Natural killer cell (primary cell): ENCODE measurements at regions of chr14 and their contacts with region 1.

Region 1: GRCh38 chr14:91228112-91229004 is 16.1 kb downstream of the GPR68 start:
- DNase-seq: peak; percentile 79 to 94
- ATAC-seq: peak; percentile 68 to 88 (median 82)
- H3K4me3 ChIP-seq: no peak overlapping the region
- H3K4me3 Mint-ChIP-seq: peak overlapping the region; percentile 81
- H3K27ac ChIP-seq: peak overlapping the region; percentile 90
- H3K27ac Mint-ChIP-seq: peak overlapping the region; percentile 98 to 100
- H3K4me1 ChIP-seq: peaks cover 95% of the 10 kb centered on the region
- H3K4me1 Mint-ChIP-seq: peaks cover 79 to 89% of the 10 kb centered on the region in 2 donors
- H3K27me3 ChIP-seq: no peaks in the 10 kb centered on the region
- H3K27me3 Mint-ChIP-seq: no peaks in the 10 kb centered on the region
- CTCF ChIP-seq: no peak

Region 2: DNA sequence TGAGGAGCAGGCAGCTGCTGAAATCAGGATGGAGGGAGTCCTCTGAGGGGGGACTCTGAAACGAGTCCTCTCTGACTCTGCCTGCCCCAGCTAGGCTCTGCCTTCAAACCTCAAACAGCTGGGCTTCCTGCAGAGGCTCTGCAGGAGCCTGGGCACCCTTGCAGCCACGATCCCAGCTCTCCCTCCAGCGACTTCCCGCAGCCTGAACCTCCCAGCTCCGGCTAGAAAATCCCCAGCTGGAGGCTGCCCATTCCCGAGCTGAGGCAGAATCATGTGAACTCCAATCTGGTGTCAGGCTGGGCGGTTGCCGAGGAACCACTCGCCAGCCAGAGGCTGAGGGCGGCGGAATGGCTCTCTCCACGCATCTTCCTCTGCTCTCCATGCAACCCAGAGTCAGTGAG is 16.1 kb after region 1 on chr14 and contains the start of gene GPR68:
- intact Hi-C with region 1: loop called (anchors 1 kb)
- DNase-seq: peak in 1 of 2 donors; percentile 68
- ATAC-seq: no peak
- H3K4me3 ChIP-seq: peak within 1 kb of the TSS; percentile 70
- H3K4me3 Mint-ChIP-seq: peak within 1 kb of the TSS; percentile 88
- H3K27ac ChIP-seq: peak within 1 kb of the TSS; percentile 92
- H3K27ac Mint-ChIP-seq: peak within 1 kb of the TSS; percentile 86 to 90
- H3K4me1 ChIP-seq: peaks cover 93% of the 10 kb centered on the region
- H3K4me1 Mint-ChIP-seq: peaks cover 75 to 77% of the 10 kb centered on the region in 2 donors
- H3K27me3 ChIP-seq: no peaks in the 10 kb centered on the region
- H3K27me3 Mint-ChIP-seq: no peaks in the 10 kb centered on the region
- CTCF ChIP-seq: no peak
- total RNA-seq, gene GPR68: 7.6 to 24.0 (median 15.7) TPM

Region 3: GRCh38 chr14:91286530-91286937 is 58.2 kb after region 1 on chr14:
- intact Hi-C with region 1: loop called (anchors 2 kb)
- DNase-seq: peak; percentile 76 to 88
- ATAC-seq: peak; percentile 76 to 82 (median 79)
- H3K4me3 ChIP-seq: no peak overlapping the region
- H3K4me3 Mint-ChIP-seq: no peak overlapping the region
- H3K27ac ChIP-seq: peak overlapping the region; percentile 5
- H3K27ac Mint-ChIP-seq: peak overlapping the region; percentile 81 to 83
- H3K4me1 ChIP-seq: peaks cover 20% of the 10 kb centered on the region
- H3K4me1 Mint-ChIP-seq: peaks cover 33 to 36% of the 10 kb centered on the region in 2 donors
- H3K27me3 ChIP-seq: no peaks in the 10 kb centered on the region
- H3K27me3 Mint-ChIP-seq: no peaks in the 10 kb centered on the region
- CTCF ChIP-seq: peak; percentile 83

Region 4: GRCh38 chr14:91373591-91374254 is 145.4 kb after region 1 on chr14:
- intact Hi-C with region 1: loop called (anchors 5 kb)
- DNase-seq: peak; percentile 52 to 82
- ATAC-seq: peak; percentile 45 to 65 (median 46)
- H3K4me3 ChIP-seq: no peak overlapping the region
- H3K4me3 Mint-ChIP-seq: peak overlapping the region; percentile 84
- H3K27ac ChIP-seq: peak overlapping the region; percentile 86
- H3K27ac Mint-ChIP-seq: peak overlapping the region; percentile 96 to 98
- H3K4me1 ChIP-seq: peaks cover 100% of the 10 kb centered on the region
- H3K4me1 Mint-ChIP-seq: peaks cover 94 to 98% of the 10 kb centered on the region in 2 donors
- H3K27me3 ChIP-seq: no peaks in the 10 kb centered on the region
- H3K27me3 Mint-ChIP-seq: no peaks in the 10 kb centered on the region
- CTCF ChIP-seq: no peak

Region 5: DNA sequence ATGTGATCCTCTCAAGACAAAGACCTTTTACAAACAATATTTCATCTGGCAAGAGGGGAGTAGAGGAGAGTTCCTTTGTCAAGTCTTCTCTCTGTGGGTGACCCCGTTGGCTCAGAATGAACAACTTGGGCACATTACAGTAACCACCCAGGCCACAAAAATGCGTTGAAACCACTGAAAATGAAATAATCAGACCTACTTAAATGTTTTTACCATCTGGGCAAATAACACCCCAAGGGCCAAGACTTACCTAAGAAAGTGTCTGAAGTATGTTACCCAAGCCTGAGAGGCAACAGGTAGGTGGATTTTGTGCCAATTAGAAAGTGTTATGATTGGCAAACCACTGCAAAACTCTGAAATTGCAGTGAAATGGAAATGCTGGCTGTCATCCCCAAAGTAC is 637.7 kb after region 1 on chr14:
- intact Hi-C with region 1: loop called (anchors 2 kb)
- DNase-seq: peak in 1 of 2 donors; percentile 53
- ATAC-seq: peak in 1 of 3 donors; percentile 7
- H3K4me3 ChIP-seq: peak overlapping the region; percentile 50
- H3K4me3 Mint-ChIP-seq: peak overlapping the region; percentile 100
- H3K27ac ChIP-seq: peak overlapping the region; percentile 62
- H3K27ac Mint-ChIP-seq: peak overlapping the region; percentile 88 to 96
- H3K4me1 ChIP-seq: peaks cover 81% of the 10 kb centered on the region
- H3K4me1 Mint-ChIP-seq: peaks cover 81 to 82% of the 10 kb centered on the region in 2 donors
- H3K27me3 ChIP-seq: no peaks in the 10 kb centered on the region
- H3K27me3 Mint-ChIP-seq: no peaks in the 10 kb centered on the region
- CTCF ChIP-seq: no peak

Region 6: GRCh38 chr14:92207012-92207928 is 978.9 kb after region 1 on chr14:
- intact Hi-C with region 1: no loop called
- DNase-seq: no peak
- ATAC-seq: no peak
- H3K4me3 ChIP-seq: no peak overlapping the region
- H3K4me3 Mint-ChIP-seq: no peak overlapping the region
- H3K27ac ChIP-seq: no peak overlapping the region
- H3K27ac Mint-ChIP-seq: no peak overlapping the region
- H3K4me1 ChIP-seq: no peaks in the 10 kb centered on the region
- H3K4me1 Mint-ChIP-seq: no peaks in the 10 kb centered on the region
- H3K27me3 ChIP-seq: no peaks in the 10 kb centered on the region
- H3K27me3 Mint-ChIP-seq: peaks cover 15 to 16% of the 10 kb centered on the region in 2 donors
- CTCF ChIP-seq: no peak